Endothelial cell of umbilical vein (primary cell): ENCODE measurements at regions of chr1 and their contacts with region 1.

Region 1: DNA sequence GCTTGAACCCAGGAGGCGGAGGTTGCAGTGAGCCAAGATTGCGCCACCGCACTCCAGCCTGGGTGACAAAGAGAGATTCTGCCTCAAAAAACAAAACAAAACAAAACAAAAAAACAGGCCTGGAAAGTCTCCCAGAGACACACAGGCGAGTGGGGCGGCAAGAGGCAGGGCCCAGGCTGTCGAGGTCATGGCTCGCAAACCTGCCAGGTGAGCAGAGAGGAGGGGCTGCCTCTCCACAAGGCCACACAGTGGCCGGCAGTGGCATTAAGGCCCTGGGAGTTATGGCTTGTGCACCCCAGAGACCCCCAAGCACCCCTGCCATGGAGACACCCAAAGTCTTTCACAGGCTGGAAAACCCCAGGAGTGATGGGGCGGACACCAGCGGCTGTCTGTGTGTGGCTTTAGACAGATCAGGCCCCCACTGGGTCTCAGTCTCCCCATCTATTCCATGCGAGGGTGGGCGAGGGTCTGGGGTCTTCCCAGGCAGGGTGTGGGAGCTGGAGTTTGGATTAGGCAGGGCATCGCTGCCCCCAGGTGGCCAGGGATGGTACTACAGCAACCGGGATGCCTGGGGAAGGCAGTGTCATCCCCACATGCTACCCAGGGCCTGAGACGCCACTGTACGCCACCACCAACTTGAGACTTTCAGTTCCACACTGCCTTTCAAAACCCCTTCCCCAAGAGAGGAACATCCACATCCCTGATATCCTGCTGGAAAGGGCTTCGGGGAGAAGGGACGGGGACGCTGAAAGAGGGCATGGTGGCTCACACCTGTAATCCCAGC is 7.3 kb upstream of the CTRC start:
- DNase-seq: peak; percentile 47
- H3K4me3 ChIP-seq: no peak overlapping the region
- H3K27ac ChIP-seq: no peak overlapping the region
- H3K4me1 ChIP-seq: no peaks in the 10 kb centered on the region
- H3K27me3 ChIP-seq: no peaks in the 10 kb centered on the region
- CTCF ChIP-seq: peak; percentile 86 to 90
- POLR2A ChIP-seq: no peak

Region 2: GRCh38 chr1:15128520-15129313 is 302.3 kb before region 1 on chr1:
- CTCF ChIA-PET with region 1: interaction called, 21 read pairs
- POLR2A ChIA-PET with region 1: no interaction called
- dilution Hi-C with region 1: no loop called
- intact Hi-C with region 1: loop called (anchors 5 kb)
- DNase-seq: peak; percentile 78
- H3K4me3 ChIP-seq: no peak overlapping the region
- H3K27ac ChIP-seq: no peak overlapping the region
- H3K4me1 ChIP-seq: no peaks in the 10 kb centered on the region
- H3K27me3 ChIP-seq: no peaks in the 10 kb centered on the region
- CTCF ChIP-seq: peak; percentile 92
- POLR2A ChIP-seq: no peak

Region 3: GRCh38 chr1:15328351-15329103 is 102.5 kb before region 1 on chr1:
- CTCF ChIA-PET with region 1: interaction called, 332 read pairs
- POLR2A ChIA-PET with region 1: interaction called, 3 read pairs
- dilution Hi-C with region 1: no loop called
- intact Hi-C with region 1: loop called (anchors 1 kb)
- DNase-seq: peak; percentile 90
- H3K4me3 ChIP-seq: peak overlapping the region in 1 of 3 experiments; percentile 14
- H3K27ac ChIP-seq: peak overlapping the region; percentile 37
- H3K4me1 ChIP-seq: peaks cover 17% of the 10 kb centered on the region
- H3K27me3 ChIP-seq: no peaks in the 10 kb centered on the region
- CTCF ChIP-seq: no peak
- POLR2A ChIP-seq: no peak

Region 4: GRCh38 chr1:15417365-15417934 is 13.5 kb before region 1 on chr1:
- CTCF ChIA-PET with region 1: interaction called, 33 read pairs
- POLR2A ChIA-PET with region 1: no interaction called
- dilution Hi-C with region 1: no loop called
- intact Hi-C with region 1: no loop called
- DNase-seq: peak; percentile 78
- H3K4me3 ChIP-seq: no peak overlapping the region
- H3K27ac ChIP-seq: peak overlapping the region; percentile 48
- H3K4me1 ChIP-seq: peaks cover 56% of the 10 kb centered on the region
- H3K27me3 ChIP-seq: no peaks in the 10 kb centered on the region
- CTCF ChIP-seq: no peak
- POLR2A ChIP-seq: peak; percentile 48

Region 5: GRCh38 chr1:15501208-15502032 is 70.4 kb after region 1 on chr1:
- CTCF ChIA-PET with region 1: interaction called, 7 read pairs
- POLR2A ChIA-PET with region 1: no interaction called
- dilution Hi-C with region 1: no loop called
- intact Hi-C with region 1: loop called (anchors 1 kb)
- DNase-seq: peak; percentile 55
- H3K4me3 ChIP-seq: no peak overlapping the region
- H3K27ac ChIP-seq: no peak overlapping the region
- H3K4me1 ChIP-seq: no peaks in the 10 kb centered on the region
- H3K27me3 ChIP-seq: no peaks in the 10 kb centered on the region
- CTCF ChIP-seq: peak; percentile 84 to 86
- POLR2A ChIP-seq: no peak